ENCODE measurements at regions of chr21 and their contacts with region 1.

Region 1: GRCh38 chr21:41167348-41168342 is at the start of gene BACE2:
- DNase-seq: peak; percentile 87
- H3K4me3 ChIP-seq: peak within 1 kb of the TSS; percentile 74 to 95 (median 92)
- H3K27ac ChIP-seq: peak within 1 kb of the TSS; percentile 85 to 94 (median 92)
- H3K4me1 ChIP-seq: peaks cover 6 to 42% (median 15%) of the 10 kb centered on the region in 4 donors
- H3K27me3 ChIP-seq: no peaks in the 10 kb centered on the region
- CTCF ChIP-seq: peak in 4 of 5 experiments; percentile 46 to 77 (median 56)
- EP300 ChIP-seq: no peak
- POLR2A ChIP-seq: peak; percentile 49
- total RNA-seq, gene BACE2: 28.4 to 52.5 (median 43.9) TPM

Region 2: GRCh38 chr21:40964691-40965090 is 203.0 kb before region 1 on chr21:
- in situ Hi-C with region 1: no loop called
- intact Hi-C with region 1: no loop called
- DNase-seq: no peak
- H3K4me3 ChIP-seq: no peak overlapping the region
- H3K27ac ChIP-seq: no peak overlapping the region
- H3K4me1 ChIP-seq: no peaks in the 10 kb centered on the region
- H3K27me3 ChIP-seq: peaks cover 7% of the 10 kb centered on the region
- CTCF ChIP-seq: no peak
- EP300 ChIP-seq: no peak
- POLR2A ChIP-seq: no peak

Region 3: GRCh38 chr21:41250194-41250918 is 82.7 kb after region 1 on chr21:
- in situ Hi-C with region 1: no loop called
- intact Hi-C with region 1: loop called (anchors 10 kb)
- DNase-seq: no peak
- H3K4me3 ChIP-seq: no peak overlapping the region
- H3K27ac ChIP-seq: no peak overlapping the region
- H3K4me1 ChIP-seq: peaks cover 0 to 3% (median 1%) of the 10 kb centered on the region in 4 donors
- H3K27me3 ChIP-seq: no peaks in the 10 kb centered on the region
- CTCF ChIP-seq: no peak
- EP300 ChIP-seq: no peak
- POLR2A ChIP-seq: no peak

Measured in transverse colon (tissue), 4 donors.